Sciatic nerve (tissue), 2 donors: ENCODE measurements at regions of chr11 and their contacts with region 1.

Region 1: DNA sequence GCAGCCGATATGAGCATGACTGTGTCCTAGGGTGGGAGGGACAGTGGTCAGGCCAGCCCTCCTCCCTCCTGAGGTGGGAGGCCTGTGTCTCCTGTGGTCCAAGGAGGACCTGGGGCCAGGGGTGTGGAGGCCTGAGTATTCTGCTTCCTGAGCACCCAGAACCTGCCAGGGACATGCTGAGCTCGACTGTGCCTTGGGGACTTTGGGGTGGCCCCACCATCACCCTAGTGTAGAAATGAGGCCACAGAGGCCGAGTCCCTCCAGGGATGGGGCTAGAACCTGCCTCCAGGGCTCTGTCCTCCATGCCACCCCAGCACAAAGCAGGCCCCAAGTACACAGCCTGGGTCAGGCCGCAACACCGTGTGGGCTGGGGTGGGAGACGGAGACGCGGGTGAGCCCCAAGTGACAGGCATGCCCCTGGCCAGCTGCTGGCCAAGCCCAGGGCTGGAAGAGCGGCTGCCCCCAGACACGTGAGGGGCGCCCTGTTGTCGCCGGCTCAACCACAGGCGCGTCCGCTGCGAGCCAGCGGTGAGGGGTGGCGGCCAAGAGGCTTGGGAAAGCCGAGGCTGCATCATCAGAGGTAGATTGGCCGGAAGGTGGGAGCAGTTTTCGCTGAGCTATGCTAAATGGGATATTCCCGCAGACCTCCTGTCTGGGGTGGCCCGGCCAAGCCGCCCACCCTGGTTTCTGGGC is 981 bp downstream of the PRR33 start:
- DNase-seq: peak; percentile 58
- ATAC-seq: peak; percentile 33

Region 2: DNA sequence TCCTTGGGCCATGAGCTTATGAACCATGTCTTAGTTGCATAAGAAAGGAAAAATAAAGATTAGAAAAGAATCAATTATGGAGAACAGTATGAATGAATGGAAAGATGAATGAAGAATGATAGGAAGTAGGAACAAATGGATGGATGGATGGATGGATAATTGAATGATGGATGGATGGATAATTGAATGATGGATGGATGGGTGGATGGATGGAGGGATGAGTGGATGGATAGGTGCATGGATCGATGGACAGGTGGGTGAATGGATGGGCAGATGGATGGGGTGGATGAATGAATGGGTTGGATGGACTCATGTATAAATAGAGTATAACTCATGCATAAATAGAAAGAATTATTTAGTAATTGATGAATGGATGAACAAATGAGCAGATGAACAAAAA is 30.6 kb before region 1 on chr11:
- intact Hi-C with region 1: loop called (anchors 1 kb)
- DNase-seq: no peak
- ATAC-seq: no peak

Region 3: GRCh38 chr11:1917671-1918516 is 27.2 kb after region 1 on chr11:
- intact Hi-C with region 1: loop called (anchors 1 kb)
- DNase-seq: no peak
- ATAC-seq: peak; percentile 11

Region 4: DNA sequence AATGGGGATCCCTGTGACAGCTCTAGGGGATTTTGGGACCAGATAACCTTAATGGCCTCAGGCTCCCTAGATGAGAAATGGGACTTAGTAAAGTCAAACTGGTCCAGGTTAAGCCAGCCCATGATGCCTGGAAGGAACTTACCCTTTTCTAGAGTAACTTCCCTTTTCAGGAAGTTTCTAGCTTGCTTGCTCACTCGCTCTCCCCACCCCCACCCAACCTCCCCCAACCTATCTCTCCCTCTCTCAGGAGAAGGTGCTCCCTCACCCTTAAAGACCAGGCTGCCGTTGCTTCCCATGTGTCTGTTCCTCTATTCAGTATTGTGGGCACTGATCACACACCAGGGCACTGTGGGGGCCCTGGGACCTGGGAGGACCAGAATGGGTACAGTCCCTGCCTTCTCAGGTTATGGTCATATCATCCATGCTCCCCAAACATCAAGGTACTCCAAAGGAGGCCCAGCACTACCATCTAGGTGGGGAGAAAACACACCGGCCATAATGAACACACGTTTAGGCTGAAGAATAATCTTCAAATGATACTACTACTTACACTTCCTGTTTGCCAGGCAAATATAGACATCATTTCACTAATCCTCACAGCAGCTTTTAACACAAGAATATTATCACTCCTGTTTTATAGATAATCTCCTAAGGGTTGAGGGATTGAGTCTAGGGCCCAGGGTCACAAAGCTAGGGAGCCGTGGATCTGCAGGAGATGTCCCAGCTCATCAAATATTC is 790.9 kb after region 1 on chr11:
- intact Hi-C with region 1: no loop called
- DNase-seq: no peak
- ATAC-seq: no peak